Endothelial cell of umbilical vein (primary cell): ENCODE measurements at regions of chr6 and their contacts with region 1.

Region 1: GRCh38 chr6:34986845-34987246 is 97.8 kb downstream of the ANKS1A start:
- DNase-seq: peak; percentile 81
- H3K4me3 ChIP-seq: no peak overlapping the region
- H3K27ac ChIP-seq: peak overlapping the region; percentile 8
- H3K4me1 ChIP-seq: peaks cover 9% of the 10 kb centered on the region
- H3K27me3 ChIP-seq: no peaks in the 10 kb centered on the region
- CTCF ChIP-seq: peak; percentile 64 to 68
- POLR2A ChIP-seq: no peak

Region 2: GRCh38 chr6:34834789-34835518 is 151.9 kb before region 1 on chr6:
- CTCF ChIA-PET with region 1: no interaction called
- POLR2A ChIA-PET with region 1: no interaction called
- dilution Hi-C with region 1: no loop called
- intact Hi-C with region 1: no loop called
- DNase-seq: no peak
- H3K4me3 ChIP-seq: no peak overlapping the region
- H3K27ac ChIP-seq: no peak overlapping the region
- H3K4me1 ChIP-seq: no peaks in the 10 kb centered on the region
- H3K27me3 ChIP-seq: no peaks in the 10 kb centered on the region
- CTCF ChIP-seq: no peak
- POLR2A ChIP-seq: no peak

Region 3: DNA sequence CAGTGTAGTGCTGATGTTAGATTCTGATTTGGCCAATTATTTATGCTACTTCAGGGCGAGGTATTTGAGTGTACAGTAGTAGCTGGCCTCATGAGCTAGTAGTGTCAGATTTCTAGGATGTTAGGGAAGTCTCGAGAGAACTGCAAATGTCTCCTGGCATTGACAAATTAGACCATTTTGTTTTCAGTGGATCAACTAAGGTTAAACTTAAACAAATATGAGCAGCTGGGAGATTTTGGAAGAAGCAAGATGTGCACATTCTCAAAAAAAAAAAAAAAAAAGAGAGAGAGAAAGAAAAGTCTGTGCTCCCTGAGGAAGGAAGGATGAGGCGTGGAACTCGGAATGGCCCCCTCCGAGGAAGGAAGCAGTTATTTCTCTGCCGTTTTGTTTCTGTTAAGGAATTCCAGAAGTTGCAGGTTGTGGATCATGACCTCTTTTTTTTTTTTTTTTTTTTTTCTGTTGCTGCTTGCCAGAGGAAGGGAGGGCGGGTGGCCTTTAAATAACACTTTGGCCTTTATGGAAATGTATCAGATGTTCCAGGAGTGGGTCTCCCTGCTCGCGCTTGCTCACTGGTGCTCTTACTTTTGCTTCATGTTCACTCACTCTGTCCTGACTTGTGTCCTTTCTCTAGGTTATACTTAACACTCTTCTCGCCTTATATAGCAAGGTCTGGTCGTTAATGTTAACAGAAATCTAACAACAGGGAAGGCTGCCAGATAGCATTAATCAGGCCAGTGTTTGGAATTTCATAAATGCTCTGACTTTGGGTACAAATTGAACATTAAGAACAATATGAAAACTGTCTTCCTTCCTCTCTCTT is 29.9 kb after region 1 on chr6:
- CTCF ChIA-PET with region 1: interaction called, 20 read pairs
- POLR2A ChIA-PET with region 1: no interaction called
- dilution Hi-C with region 1: no loop called
- intact Hi-C with region 1: no loop called
- DNase-seq: peak; percentile 92
- H3K4me3 ChIP-seq: peak overlapping the region in 2 of 3 experiments; percentile 33 to 36
- H3K27ac ChIP-seq: peak overlapping the region; percentile 84
- H3K4me1 ChIP-seq: peaks cover 61% of the 10 kb centered on the region
- H3K27me3 ChIP-seq: no peaks in the 10 kb centered on the region
- CTCF ChIP-seq: no peak
- POLR2A ChIP-seq: peak; percentile 74

Region 4: GRCh38 chr6:35049900-35050756 is 63.3 kb after region 1 on chr6:
- CTCF ChIA-PET with region 1: interaction called, 19 read pairs
- POLR2A ChIA-PET with region 1: no interaction called
- dilution Hi-C with region 1: no loop called
- intact Hi-C with region 1: loop called (anchors 2 kb)
- DNase-seq: no peak
- H3K4me3 ChIP-seq: no peak overlapping the region
- H3K27ac ChIP-seq: no peak overlapping the region
- H3K4me1 ChIP-seq: peaks cover 36% of the 10 kb centered on the region
- H3K27me3 ChIP-seq: no peaks in the 10 kb centered on the region
- CTCF ChIP-seq: no peak
- POLR2A ChIP-seq: no peak

Region 5: GRCh38 chr6:35089935-35090505 is 103.2 kb after region 1 on chr6:
- CTCF ChIA-PET with region 1: interaction called, 11 read pairs
- POLR2A ChIA-PET with region 1: no interaction called
- dilution Hi-C with region 1: no loop called
- intact Hi-C with region 1: no loop called
- DNase-seq: no peak
- H3K4me3 ChIP-seq: no peak overlapping the region
- H3K27ac ChIP-seq: no peak overlapping the region
- H3K4me1 ChIP-seq: no peaks in the 10 kb centered on the region
- H3K27me3 ChIP-seq: no peaks in the 10 kb centered on the region
- CTCF ChIP-seq: no peak
- POLR2A ChIP-seq: no peak

Region 6: DNA sequence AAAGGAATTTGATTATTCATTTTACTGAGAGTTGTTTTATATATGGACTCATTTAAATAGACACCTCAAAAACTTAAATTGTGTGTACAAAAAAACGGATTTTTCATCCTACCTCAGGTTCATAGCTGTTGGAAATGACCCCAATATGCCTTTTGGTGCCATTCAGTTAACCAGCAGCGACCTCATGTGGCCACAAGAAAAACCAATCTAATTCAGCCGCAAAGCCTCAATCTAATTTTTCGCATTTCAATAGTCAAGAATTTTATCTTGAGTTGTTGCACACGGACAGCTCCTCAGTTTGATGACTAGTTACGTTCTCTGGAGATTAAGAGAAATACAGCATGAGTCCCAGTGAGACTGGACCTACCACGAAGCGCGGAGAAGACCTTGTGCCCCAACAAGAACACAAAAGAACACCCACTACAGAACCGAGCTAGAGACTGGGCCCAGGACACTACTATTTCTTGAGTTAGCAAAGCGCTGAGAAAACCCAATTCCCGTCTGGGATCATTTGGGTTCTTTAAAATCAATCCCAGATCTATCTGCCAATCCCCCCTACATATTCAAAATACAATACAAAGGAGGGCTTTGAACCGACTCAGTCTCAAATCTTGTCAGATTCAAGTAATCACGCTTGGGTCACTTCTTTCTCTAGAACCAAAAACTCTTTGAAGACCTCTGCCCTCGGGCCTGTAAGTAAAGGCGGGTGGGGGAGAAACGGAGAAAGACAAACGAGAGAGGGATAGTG is 153.2 kb after region 1 on chr6:
- CTCF ChIA-PET with region 1: interaction called, 302 read pairs
- POLR2A ChIA-PET with region 1: interaction called, 5 read pairs
- dilution Hi-C with region 1: no loop called
- intact Hi-C with region 1: loop called (anchors 1 kb)
- DNase-seq: peak; percentile 75
- H3K4me3 ChIP-seq: no peak overlapping the region
- H3K27ac ChIP-seq: no peak overlapping the region
- H3K4me1 ChIP-seq: no peaks in the 10 kb centered on the region
- H3K27me3 ChIP-seq: no peaks in the 10 kb centered on the region
- CTCF ChIP-seq: peak; percentile 62 to 80
- POLR2A ChIP-seq: no peak

Region 7: GRCh38 chr6:35240840-35241801 is 254.3 kb after region 1 on chr6:
- CTCF ChIA-PET with region 1: interaction called, 61 read pairs
- POLR2A ChIA-PET with region 1: no interaction called
- dilution Hi-C with region 1: no loop called
- intact Hi-C with region 1: loop called (anchors 1 kb)
- DNase-seq: peak; percentile 65
- H3K4me3 ChIP-seq: no peak overlapping the region
- H3K27ac ChIP-seq: no peak overlapping the region
- H3K4me1 ChIP-seq: peaks cover 20% of the 10 kb centered on the region
- H3K27me3 ChIP-seq: no peaks in the 10 kb centered on the region
- CTCF ChIP-seq: peak; percentile 86 to 94
- POLR2A ChIP-seq: no peak